ENCODE measurements at regions of chrX and their contacts with region 1.

Region 1: GRCh38 chrX:29952016-29952415 is 263.3 kb upstream of the MAGEB2 start:
- DNase-seq: no peak
- ATAC-seq: no peak
- H3K4me3 ChIP-seq: no peak overlapping the region
- H3K27ac ChIP-seq: no peak overlapping the region
- H3K4me1 ChIP-seq: no peaks in the 10 kb centered on the region
- H3K27me3 ChIP-seq: no peaks in the 10 kb centered on the region
- CTCF ChIP-seq: no peak
- POLR2A ChIP-seq: no peak

Region 2: DNA sequence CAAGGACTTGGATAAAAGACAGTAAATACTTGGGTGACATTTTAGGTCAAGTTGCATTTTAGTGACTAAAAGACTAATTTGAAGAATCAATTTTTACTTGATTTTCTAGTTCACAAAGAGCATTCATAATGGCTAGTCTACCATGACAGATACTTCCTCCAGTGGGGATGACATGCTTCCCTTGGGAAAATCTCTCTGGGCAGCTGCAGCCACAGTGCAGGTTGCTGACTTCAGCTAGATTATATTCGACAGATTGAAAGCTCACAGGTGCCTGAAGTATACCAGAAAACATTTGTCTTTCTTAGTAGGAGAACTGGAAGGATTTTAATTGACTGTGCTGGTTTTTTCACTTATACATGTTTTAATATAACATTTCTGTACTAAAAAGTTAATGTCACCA is 53.8 kb after region 1 on chrX:
- in situ Hi-C with region 1: no loop called
- intact Hi-C with region 1: loop called (anchors 2 kb)
- DNase-seq: no peak
- ATAC-seq: no peak
- H3K4me3 ChIP-seq: no peak overlapping the region
- H3K27ac ChIP-seq: no peak overlapping the region
- H3K4me1 ChIP-seq: no peaks in the 10 kb centered on the region
- H3K27me3 ChIP-seq: no peaks in the 10 kb centered on the region
- CTCF ChIP-seq: no peak
- POLR2A ChIP-seq: no peak